K562 (cell line): ENCODE measurements at regions of chr4 and their contacts with region 1.

Region 1: GRCh38 chr4:81335122-81335912 is 120.3 kb upstream of the PRKG2 start:
- DNase-seq: no peak
- ATAC-seq: no peak
- H3K4me3 ChIP-seq: no peak overlapping the region
- H3K27ac ChIP-seq: no peak overlapping the region
- H3K4me1 ChIP-seq: no peaks in the 10 kb centered on the region
- H3K27me3 ChIP-seq: peaks cover 0 to 3% of the 10 kb centered on the region in 2 experiments; a peak in 1 of 5 replicates
- CTCF ChIP-seq: no peak
- EP300 ChIP-seq: no peak
- POLR2A ChIP-seq: no peak
- RAD21 ChIP-seq: no peak

Region 2: DNA sequence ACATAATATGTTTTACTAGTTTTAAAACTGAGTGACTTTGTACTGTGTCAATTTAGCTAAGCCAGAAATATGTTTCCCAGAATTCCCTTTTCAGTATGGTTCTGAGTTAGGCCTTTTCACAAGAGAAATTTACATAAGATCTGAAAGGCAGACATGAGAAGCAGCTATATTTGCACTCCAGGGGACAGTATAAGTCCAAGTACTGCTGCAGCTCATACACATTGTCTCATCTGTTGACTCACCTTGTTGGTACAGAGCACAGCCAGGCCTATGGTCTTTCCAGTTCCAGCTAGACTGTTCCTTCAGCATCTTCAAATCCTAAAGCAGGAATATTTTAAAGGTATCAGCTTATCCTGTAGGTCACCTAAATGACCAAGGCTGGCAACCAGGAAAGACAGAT is 251.3 kb before region 1 on chr4:
- CTCF ChIA-PET with region 1: no interaction called
- POLR2A ChIA-PET with region 1: no interaction called
- in situ Hi-C with region 1: loop called (anchors 25 kb)
- intact Hi-C with region 1: no loop called
- DNase-seq: no peak
- ATAC-seq: no peak
- H3K4me3 ChIP-seq: no peak overlapping the region
- H3K27ac ChIP-seq: no peak overlapping the region
- H3K4me1 ChIP-seq: no peaks in the 10 kb centered on the region
- H3K27me3 ChIP-seq: no peaks in the 10 kb centered on the region
- CTCF ChIP-seq: peak in 1 of 3 experiments; percentile 22; a peak in 2 of 6 replicates
- EP300 ChIP-seq: no peak
- POLR2A ChIP-seq: no peak
- RAD21 ChIP-seq: peak in 1 of 2 experiments; percentile 19; a peak in 1 of 4 replicates

Region 3: DNA sequence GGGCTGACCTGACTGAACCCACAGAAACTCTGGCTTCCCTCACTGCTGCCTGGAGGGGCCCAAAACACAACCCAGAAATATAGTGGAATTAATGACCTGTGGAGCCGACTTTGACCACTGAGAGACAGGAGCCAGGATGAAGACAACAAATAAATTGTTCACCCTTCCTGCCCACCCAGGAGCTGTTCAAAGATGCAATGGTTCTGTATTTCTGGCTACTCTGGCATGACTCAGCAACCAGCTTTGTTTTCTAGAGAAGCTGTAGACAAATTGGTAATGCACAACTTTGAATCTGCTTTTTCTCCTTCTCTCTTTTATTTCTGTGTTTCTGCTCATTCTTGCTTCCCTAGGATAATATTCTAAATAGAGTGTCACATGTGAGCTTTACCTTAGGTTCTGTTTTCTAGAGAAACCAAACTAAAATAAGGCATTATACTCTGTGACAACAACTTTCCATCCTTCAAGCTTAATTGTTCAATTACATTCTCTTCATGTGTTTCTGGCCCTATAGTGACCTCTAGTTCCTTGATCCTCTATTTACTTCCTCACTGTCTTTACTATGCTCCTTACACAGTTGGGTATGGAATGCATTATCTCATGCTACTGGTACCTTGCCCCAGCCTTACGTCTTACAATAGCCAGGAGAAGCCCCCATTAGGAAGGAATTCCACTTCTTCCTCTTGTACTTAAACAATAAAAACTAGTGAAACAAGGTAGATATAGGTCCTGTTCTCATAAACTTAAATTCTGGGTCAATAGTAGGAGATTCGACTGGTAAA is 113.8 kb before region 1 on chr4:
- CTCF ChIA-PET with region 1: no interaction called
- POLR2A ChIA-PET with region 1: no interaction called
- in situ Hi-C with region 1: no loop called
- intact Hi-C with region 1: no loop called
- DNase-seq: no peak
- ATAC-seq: no peak
- H3K4me3 ChIP-seq: no peak overlapping the region
- H3K27ac ChIP-seq: no peak overlapping the region
- H3K4me1 ChIP-seq: no peaks in the 10 kb centered on the region
- H3K27me3 ChIP-seq: no peaks in the 10 kb centered on the region; a peak in 1 of 5 replicates
- CTCF ChIP-seq: no peak
- EP300 ChIP-seq: no peak
- POLR2A ChIP-seq: no peak
- RAD21 ChIP-seq: no peak

Region 4: GRCh38 chr4:81421346-81422218 is 86.3 kb after region 1 on chr4:
- CTCF ChIA-PET with region 1: no interaction called
- POLR2A ChIA-PET with region 1: no interaction called
- in situ Hi-C with region 1: no loop called
- intact Hi-C with region 1: no loop called
- DNase-seq: peak; percentile 79 to 95 (median 84)
- ATAC-seq: peak; percentile 97
- H3K4me3 ChIP-seq: no peak overlapping the region
- H3K27ac ChIP-seq: peak overlapping the region; percentile 91
- H3K4me1 ChIP-seq: peaks cover 16 to 69% of the 10 kb centered on the region in 2 experiments
- H3K27me3 ChIP-seq: no peaks in the 10 kb centered on the region
- CTCF ChIP-seq: no peak
- EP300 ChIP-seq: peak; percentile 96
- POLR2A ChIP-seq: peak; percentile 76
- RAD21 ChIP-seq: no peak